ENCODE measurements at regions of chr6 and their contacts with region 1.

Region 1: DNA sequence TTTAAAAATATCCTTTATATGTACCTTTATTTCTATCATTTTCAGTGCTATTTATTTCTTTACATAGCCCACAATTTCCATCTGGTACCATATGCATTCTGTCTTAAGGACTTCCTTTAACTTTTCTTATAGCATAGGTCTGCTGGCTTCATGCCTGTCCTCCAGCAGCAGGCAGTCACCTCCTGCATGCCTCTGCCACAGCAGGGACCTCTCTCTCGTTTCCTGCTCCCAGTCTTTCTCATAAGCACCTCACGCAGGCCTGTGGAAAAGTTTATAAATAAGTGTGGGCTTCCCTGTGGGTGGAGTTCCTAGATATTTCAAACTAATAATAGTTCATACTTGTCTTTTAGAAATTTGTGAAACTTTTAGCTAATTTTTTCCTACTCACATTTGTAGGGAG is 133.9 kb downstream of the KCNQ5 start:
- DNase-seq: no peak
- ATAC-seq: no peak
- H3K4me3 ChIP-seq: no peak overlapping the region
- H3K4me3 Mint-ChIP-seq: no peak overlapping the region
- H3K27ac ChIP-seq: no peak overlapping the region
- H3K27ac Mint-ChIP-seq: no peak overlapping the region
- H3K4me1 ChIP-seq: no peaks in the 10 kb centered on the region
- H3K4me1 Mint-ChIP-seq: peaks cover 2% of the 10 kb centered on the region
- H3K27me3 ChIP-seq: no peaks in the 10 kb centered on the region
- H3K27me3 Mint-ChIP-seq: no peaks in the 10 kb centered on the region
- CTCF ChIP-seq: no peak

Region 2: DNA sequence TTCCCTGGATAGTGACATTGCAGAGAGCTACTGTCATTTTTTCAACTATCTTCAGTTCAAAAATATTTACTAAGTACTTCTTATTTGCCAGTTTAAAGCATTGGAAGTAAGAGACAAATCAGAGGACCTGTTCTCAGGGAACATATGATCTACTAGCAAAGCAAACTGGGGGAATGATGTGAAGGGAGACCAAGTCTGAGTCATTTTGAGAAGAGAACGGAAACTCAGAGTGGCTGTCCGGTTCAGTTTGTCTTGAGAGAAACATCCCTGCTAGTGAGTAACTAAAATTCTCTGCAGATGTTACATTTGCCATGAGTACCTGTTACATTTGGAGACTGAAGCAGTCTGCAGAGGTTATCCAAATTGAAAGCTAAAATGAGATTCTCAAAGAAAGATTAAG is 15.6 kb before region 1 on chr6:
- CTCF ChIA-PET with region 1: no interaction called
- POLR2A ChIA-PET with region 1: no interaction called
- intact Hi-C with region 1: loop called (anchors 2 kb)
- DNase-seq: no peak
- ATAC-seq: peak; percentile 33
- H3K4me3 ChIP-seq: no peak overlapping the region
- H3K4me3 Mint-ChIP-seq: peak overlapping the region; percentile 23
- H3K27ac ChIP-seq: peak overlapping the region in 1 of 2 donors; percentile 3
- H3K27ac Mint-ChIP-seq: no peak overlapping the region
- H3K4me1 ChIP-seq: peaks cover 30 to 33% of the 10 kb centered on the region in 2 donors
- H3K4me1 Mint-ChIP-seq: peaks cover 32% of the 10 kb centered on the region
- H3K27me3 ChIP-seq: no peaks in the 10 kb centered on the region
- H3K27me3 Mint-ChIP-seq: no peaks in the 10 kb centered on the region
- CTCF ChIP-seq: no peak

Region 3: GRCh38 chr6:72953971-72954381 is 198.2 kb after region 1 on chr6:
- CTCF ChIA-PET with region 1: no interaction called
- POLR2A ChIA-PET with region 1: no interaction called
- intact Hi-C with region 1: no loop called
- DNase-seq: no peak
- ATAC-seq: no peak
- H3K4me3 ChIP-seq: no peak overlapping the region
- H3K4me3 Mint-ChIP-seq: no peak overlapping the region
- H3K27ac ChIP-seq: no peak overlapping the region
- H3K27ac Mint-ChIP-seq: no peak overlapping the region
- H3K4me1 ChIP-seq: no peaks in the 10 kb centered on the region
- H3K4me1 Mint-ChIP-seq: peaks cover 5% of the 10 kb centered on the region
- H3K27me3 ChIP-seq: no peaks in the 10 kb centered on the region
- H3K27me3 Mint-ChIP-seq: no peaks in the 10 kb centered on the region
- CTCF ChIP-seq: no peak

Region 4: DNA sequence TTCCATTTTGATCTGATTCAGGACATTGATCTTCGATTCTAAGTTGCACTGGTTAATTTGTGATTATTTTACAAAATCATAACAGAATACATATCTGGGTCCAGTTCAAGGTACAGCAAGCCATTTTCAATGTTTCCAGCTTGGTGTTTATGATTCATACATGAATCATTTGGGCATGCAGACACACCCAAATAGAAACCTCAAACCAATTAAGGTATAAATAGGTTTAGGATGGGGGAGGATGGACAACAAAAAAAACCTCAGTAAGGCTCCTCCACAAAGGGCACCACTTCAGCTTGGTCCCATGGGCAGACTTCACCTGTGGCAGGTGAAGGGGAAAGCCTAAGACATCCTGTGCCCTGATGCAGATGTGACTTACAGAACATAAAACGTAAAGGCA is 276.8 kb after region 1 on chr6:
- CTCF ChIA-PET with region 1: no interaction called
- POLR2A ChIA-PET with region 1: no interaction called
- intact Hi-C with region 1: no loop called
- DNase-seq: no peak
- ATAC-seq: no peak
- H3K4me3 ChIP-seq: no peak overlapping the region
- H3K4me3 Mint-ChIP-seq: no peak overlapping the region
- H3K27ac ChIP-seq: no peak overlapping the region
- H3K27ac Mint-ChIP-seq: no peak overlapping the region
- H3K4me1 ChIP-seq: no peaks in the 10 kb centered on the region
- H3K4me1 Mint-ChIP-seq: peaks cover 5% of the 10 kb centered on the region
- H3K27me3 ChIP-seq: no peaks in the 10 kb centered on the region
- H3K27me3 Mint-ChIP-seq: no peaks in the 10 kb centered on the region
- CTCF ChIP-seq: no peak